Activated CD4-positive, alpha-beta memory T cell treated with anti-CD3 and anti-CD28 coated beads for 36 hours (primary cell): ENCODE measurements at regions of chr17 and their contacts with region 1.

Region 1: DNA sequence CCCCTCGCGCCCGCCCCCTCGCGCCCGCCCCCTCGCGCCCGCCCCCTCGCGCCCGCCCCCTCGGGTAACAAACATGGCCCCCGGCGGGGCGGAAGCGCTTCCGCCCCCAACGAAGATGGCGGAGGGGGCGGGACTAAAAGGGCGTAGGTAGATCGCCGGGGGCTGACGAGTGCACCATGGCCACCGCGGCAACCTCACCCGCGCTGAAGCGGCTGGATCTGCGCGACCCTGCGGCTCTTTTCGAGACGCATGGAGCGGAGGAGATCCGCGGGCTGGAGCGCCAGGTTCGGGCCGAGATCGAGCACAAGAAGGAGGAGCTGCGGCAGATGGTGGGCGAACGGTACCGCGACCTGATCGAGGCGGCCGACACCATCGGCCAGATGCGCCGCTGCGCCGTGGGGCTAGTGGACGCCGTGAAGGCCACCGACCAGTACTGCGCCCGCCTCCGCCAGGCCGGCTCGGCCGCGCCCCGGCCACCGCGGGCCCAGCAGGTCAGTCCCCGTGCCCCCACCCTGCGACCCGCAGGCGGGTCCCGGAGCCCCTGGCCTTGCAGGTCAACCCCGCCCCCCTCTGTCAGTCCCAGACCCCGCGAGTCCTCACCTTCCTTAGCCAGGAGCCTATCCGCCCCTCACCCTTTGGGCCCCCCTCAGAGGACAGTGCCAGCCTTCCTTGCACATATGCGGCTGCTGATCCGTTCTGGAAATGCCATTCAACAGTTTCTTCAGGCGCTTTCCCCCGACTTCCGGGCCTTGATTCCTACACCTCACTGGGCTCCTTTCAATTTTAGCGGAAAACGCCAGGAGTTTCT is at the start of gene COG1:
- DNase-seq: peak; percentile 92
- H3K4me3 Mint-ChIP-seq: peak within 1 kb of the TSS; percentile 95
- H3K27ac Mint-ChIP-seq: peak within 1 kb of the TSS; percentile 92
- H3K4me1 Mint-ChIP-seq: peaks cover 25% of the 10 kb centered on the region
- H3K27me3 Mint-ChIP-seq: no peaks in the 10 kb centered on the region
- total RNA-seq, gene COG1: 29.8 to 30.6 TPM

Region 2: DNA sequence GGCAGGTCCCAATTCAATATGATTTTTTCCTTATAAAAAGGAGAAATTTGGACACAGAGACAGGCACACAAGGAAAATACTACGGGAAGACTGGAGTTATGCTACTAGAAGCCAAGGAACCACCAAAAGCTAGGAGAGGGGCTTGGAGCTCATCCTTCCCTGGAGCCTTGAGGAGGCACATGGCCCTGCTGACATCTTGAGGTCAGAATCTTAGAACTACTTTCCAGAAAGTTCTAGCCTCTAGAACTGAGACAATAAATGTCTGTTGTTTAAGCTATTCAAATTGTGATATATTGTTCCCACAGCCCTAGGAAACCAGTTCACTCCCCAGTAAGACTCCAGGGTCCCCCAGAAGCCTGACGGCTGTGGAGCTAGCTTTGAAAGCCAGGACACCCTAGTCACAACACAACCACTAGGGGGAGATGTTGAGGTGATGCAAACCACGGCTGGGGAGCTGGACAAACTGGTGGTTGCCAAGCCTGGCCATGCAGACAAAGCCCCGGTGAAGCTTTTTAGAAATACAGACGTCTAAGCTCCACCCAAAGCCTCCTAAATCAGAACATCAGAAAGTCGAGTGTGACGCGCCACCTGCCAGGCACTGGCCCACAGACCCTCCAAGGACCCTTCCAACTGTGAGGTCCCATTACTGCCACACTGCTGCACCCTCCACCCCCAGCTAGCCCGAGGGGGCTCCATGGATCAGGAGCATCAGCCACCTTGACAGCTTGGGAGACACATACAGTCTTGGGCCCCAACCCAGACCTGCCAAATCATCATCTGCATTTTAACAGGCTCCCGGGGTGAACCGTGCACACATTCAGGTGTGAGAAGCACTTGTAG is 207.0 kb before region 1 on chr17:
- CTCF ChIA-PET with region 1: interaction called, 10 read pairs
- POLR2A ChIA-PET with region 1: no interaction called
- intact Hi-C with region 1: no loop called
- DNase-seq: peak; percentile 69
- H3K4me3 Mint-ChIP-seq: no peak overlapping the region
- H3K27ac Mint-ChIP-seq: no peak overlapping the region
- H3K4me1 Mint-ChIP-seq: peaks cover 1% of the 10 kb centered on the region
- H3K27me3 Mint-ChIP-seq: no peaks in the 10 kb centered on the region

Region 3: GRCh38 chr17:73203135-73203787 is 10.2 kb after region 1 on chr17:
- CTCF ChIA-PET with region 1: interaction called, 10 read pairs
- POLR2A ChIA-PET with region 1: no interaction called
- intact Hi-C with region 1: no loop called
- DNase-seq: no peak
- H3K4me3 Mint-ChIP-seq: no peak overlapping the region
- H3K27ac Mint-ChIP-seq: peak overlapping the region; percentile 47
- H3K4me1 Mint-ChIP-seq: peaks cover 15% of the 10 kb centered on the region
- H3K27me3 Mint-ChIP-seq: no peaks in the 10 kb centered on the region

Region 4: GRCh38 chr17:73255671-73256181 is 62.6 kb after region 1 on chr17:
- CTCF ChIA-PET with region 1: no interaction called
- POLR2A ChIA-PET with region 1: no interaction called
- intact Hi-C with region 1: loop called (anchors 2 kb)
- DNase-seq: peak; percentile 65
- H3K4me3 Mint-ChIP-seq: no peak overlapping the region
- H3K27ac Mint-ChIP-seq: no peak overlapping the region
- H3K4me1 Mint-ChIP-seq: peaks cover 3% of the 10 kb centered on the region
- H3K27me3 Mint-ChIP-seq: no peaks in the 10 kb centered on the region

Region 5: GRCh38 chr17:73278465-73279453 is 85.7 kb after region 1 on chr17:
- CTCF ChIA-PET with region 1: no interaction called
- POLR2A ChIA-PET with region 1: no interaction called
- intact Hi-C with region 1: no loop called
- DNase-seq: no peak
- H3K4me3 Mint-ChIP-seq: no peak overlapping the region
- H3K27ac Mint-ChIP-seq: no peak overlapping the region
- H3K4me1 Mint-ChIP-seq: no peaks in the 10 kb centered on the region
- H3K27me3 Mint-ChIP-seq: peaks cover 3% of the 10 kb centered on the region

Region 6: DNA sequence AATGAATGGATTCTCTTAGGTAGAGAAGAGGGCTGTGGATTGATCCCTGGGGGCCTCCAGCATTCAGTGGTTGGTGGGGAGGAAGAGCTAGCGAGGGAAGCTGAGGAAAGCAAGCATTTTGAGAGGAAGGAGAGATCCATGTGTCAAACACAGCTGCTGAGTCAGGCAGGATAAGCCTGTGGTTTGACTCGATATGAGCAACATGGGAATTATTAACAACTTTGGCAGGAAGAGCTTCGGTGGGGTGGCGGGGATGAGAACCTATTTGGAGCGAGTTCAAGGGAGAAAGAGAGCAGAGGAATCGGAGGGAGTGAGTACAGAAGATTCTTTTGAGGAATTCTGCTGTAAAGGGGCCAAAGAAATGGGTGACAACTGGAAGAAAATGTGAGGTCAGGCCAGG is 178.2 kb after region 1 on chr17:
- CTCF ChIA-PET with region 1: interaction called, 7 read pairs
- POLR2A ChIA-PET with region 1: no interaction called
- intact Hi-C with region 1: loop called (anchors 5 kb)
- DNase-seq: no peak
- H3K4me3 Mint-ChIP-seq: no peak overlapping the region
- H3K27ac Mint-ChIP-seq: no peak overlapping the region
- H3K4me1 Mint-ChIP-seq: no peaks in the 10 kb centered on the region
- H3K27me3 Mint-ChIP-seq: peaks cover 6% of the 10 kb centered on the region